Activated CD8-positive, alpha-beta T cell treated with anti-CD3 and anti-CD28 coated beads for 36 hours (primary cell): ENCODE measurements at regions of chr18 and their contacts with region 1.

Region 1: GRCh38 chr18:54149078-54149697 is 75.3 kb downstream of the MBD2 start:
- DNase-seq: peak; percentile 92
- ATAC-seq: peak; percentile 88
- H3K4me3 Mint-ChIP-seq: peak overlapping the region; percentile 47
- H3K27ac Mint-ChIP-seq: peak overlapping the region; percentile 96
- H3K4me1 Mint-ChIP-seq: peaks cover 46% of the 10 kb centered on the region
- H3K27me3 Mint-ChIP-seq: no peaks in the 10 kb centered on the region
- CTCF ChIP-seq: no peak

Region 2: GRCh38 chr18:54173980-54174630 is 24.9 kb after region 1 on chr18:
- CTCF ChIA-PET with region 1: no interaction called
- POLR2A ChIA-PET with region 1: no interaction called
- intact Hi-C with region 1: loop called (anchors 2 kb)
- DNase-seq: peak; percentile 22
- ATAC-seq: peak; percentile 77
- H3K4me3 Mint-ChIP-seq: no peak overlapping the region
- H3K27ac Mint-ChIP-seq: peak overlapping the region; percentile 90
- H3K4me1 Mint-ChIP-seq: peaks cover 39% of the 10 kb centered on the region
- H3K27me3 Mint-ChIP-seq: no peaks in the 10 kb centered on the region
- CTCF ChIP-seq: no peak

Region 3: DNA sequence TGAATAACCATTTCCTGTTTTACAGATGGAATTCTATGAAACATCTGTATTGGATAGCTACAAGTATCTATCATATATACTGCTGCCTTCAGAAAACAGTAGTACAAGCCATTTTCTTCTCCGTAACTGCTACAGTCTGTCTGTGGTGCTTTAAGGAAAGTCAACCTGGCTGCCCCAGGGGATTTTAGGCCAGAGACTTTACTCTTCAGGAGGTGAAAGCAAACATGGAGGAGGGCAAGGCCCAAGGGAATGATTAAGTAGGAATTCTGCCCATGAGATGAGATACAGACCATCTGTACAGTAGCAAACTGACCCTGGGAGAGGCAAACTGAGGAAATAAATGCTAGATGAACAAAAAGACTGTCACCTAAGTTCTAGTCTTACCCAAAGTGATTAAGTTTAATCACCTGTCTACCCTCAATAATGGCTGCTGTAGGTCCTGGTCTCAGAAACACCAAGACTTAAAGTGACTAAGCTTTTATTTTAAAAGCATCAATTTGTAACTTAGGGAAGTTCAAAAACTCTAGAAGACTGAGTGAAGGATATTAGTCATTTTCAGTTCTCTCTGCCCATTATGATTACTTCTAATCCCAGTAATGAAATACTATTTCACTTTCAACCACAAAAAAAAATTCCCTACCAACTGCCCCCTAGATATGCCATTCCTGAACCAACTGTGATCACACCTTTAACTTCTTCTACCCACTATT is 60.4 kb after region 1 on chr18:
- CTCF ChIA-PET with region 1: no interaction called
- POLR2A ChIA-PET with region 1: interaction called, 4 read pairs
- intact Hi-C with region 1: loop called (anchors 2 kb)
- DNase-seq: no peak
- ATAC-seq: peak; percentile 87
- H3K4me3 Mint-ChIP-seq: peak overlapping the region; percentile 34
- H3K27ac Mint-ChIP-seq: peak overlapping the region; percentile 81
- H3K4me1 Mint-ChIP-seq: peaks cover 56% of the 10 kb centered on the region
- H3K27me3 Mint-ChIP-seq: no peaks in the 10 kb centered on the region
- CTCF ChIP-seq: no peak

Region 4: DNA sequence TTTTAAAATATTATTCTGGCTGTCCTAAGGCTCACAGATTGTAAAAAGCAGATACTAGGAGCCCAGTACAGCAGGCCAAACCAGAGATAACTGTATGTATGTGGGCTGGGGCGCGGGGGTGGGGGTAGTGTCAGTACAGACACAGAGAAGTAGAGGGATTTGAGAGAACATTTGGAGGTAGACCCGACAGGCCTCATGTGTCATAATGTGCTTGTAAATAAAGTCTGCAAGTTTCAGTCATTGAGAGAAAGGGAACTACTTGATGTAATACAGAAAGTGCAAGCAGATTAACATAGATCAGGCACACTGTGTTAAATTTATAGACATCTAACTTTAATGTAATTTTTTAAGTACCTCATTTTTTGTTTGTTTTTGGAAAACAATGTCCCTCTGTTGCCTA is 112.7 kb after region 1 on chr18:
- CTCF ChIA-PET with region 1: no interaction called
- POLR2A ChIA-PET with region 1: no interaction called
- intact Hi-C with region 1: loop called (anchors 5 kb)
- DNase-seq: peak; percentile 90
- ATAC-seq: peak; percentile 72
- H3K4me3 Mint-ChIP-seq: peak overlapping the region; percentile 16
- H3K27ac Mint-ChIP-seq: peak overlapping the region; percentile 91
- H3K4me1 Mint-ChIP-seq: peaks cover 48% of the 10 kb centered on the region
- H3K27me3 Mint-ChIP-seq: no peaks in the 10 kb centered on the region
- CTCF ChIP-seq: no peak

Region 5: DNA sequence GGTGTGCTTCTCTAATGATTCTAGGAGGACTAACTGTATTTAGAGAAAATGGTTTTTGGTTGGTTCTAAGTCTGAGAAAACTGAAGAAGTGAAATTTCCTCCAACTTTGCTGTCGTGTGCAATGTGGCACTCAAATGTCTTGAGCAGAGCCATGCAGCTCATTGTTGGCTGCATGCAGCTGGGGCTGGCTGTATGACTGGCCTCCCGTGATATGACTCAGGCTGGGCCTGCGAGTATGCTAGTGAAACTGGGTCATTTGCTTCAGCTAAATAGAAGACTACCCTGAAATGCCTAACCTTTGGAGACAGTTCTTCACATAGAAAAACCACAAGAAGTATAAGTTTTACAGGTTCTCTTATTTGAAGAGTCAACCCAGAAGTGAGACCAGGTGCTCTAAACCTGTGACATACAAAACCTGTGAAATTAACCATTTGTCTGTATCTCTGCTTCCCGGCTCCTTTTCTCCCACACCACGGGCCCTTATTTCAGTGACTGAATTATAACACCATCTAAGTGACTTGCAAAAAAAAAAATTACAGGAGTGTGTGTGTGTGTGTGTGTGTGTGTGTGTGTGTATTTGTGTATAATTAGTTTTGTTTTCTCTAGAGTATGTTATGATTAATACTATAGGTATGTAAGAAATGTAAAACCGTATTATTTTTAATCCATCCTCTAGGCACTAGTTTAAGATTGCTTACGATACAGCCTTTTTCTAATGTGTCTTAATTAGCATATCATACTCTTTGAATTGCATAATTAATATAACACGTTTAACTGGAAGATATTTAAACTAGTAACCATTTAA is 136.0 kb after region 1 on chr18:
- CTCF ChIA-PET with region 1: no interaction called
- POLR2A ChIA-PET with region 1: no interaction called
- intact Hi-C with region 1: loop called (anchors 5 kb)
- DNase-seq: peak; percentile 92
- ATAC-seq: peak; percentile 97
- H3K4me3 Mint-ChIP-seq: peak overlapping the region; percentile 18
- H3K27ac Mint-ChIP-seq: peak overlapping the region; percentile 86
- H3K4me1 Mint-ChIP-seq: peaks cover 28% of the 10 kb centered on the region
- H3K27me3 Mint-ChIP-seq: no peaks in the 10 kb centered on the region
- CTCF ChIP-seq: no peak